ENCODE measurements at regions of chr2 and their contacts with region 1.

Region 1: GRCh38 chr2:189751080-189751658 is 11.4 kb downstream of the OSGEPL1 start:
- DNase-seq: no peak
- ATAC-seq: peak; percentile 56
- H3K4me3 Mint-ChIP-seq: no peak overlapping the region
- H3K27ac Mint-ChIP-seq: no peak overlapping the region
- H3K4me1 Mint-ChIP-seq: no peaks in the 10 kb centered on the region
- H3K27me3 Mint-ChIP-seq: no peaks in the 10 kb centered on the region
- CTCF ChIP-seq: no peak

Region 2: DNA sequence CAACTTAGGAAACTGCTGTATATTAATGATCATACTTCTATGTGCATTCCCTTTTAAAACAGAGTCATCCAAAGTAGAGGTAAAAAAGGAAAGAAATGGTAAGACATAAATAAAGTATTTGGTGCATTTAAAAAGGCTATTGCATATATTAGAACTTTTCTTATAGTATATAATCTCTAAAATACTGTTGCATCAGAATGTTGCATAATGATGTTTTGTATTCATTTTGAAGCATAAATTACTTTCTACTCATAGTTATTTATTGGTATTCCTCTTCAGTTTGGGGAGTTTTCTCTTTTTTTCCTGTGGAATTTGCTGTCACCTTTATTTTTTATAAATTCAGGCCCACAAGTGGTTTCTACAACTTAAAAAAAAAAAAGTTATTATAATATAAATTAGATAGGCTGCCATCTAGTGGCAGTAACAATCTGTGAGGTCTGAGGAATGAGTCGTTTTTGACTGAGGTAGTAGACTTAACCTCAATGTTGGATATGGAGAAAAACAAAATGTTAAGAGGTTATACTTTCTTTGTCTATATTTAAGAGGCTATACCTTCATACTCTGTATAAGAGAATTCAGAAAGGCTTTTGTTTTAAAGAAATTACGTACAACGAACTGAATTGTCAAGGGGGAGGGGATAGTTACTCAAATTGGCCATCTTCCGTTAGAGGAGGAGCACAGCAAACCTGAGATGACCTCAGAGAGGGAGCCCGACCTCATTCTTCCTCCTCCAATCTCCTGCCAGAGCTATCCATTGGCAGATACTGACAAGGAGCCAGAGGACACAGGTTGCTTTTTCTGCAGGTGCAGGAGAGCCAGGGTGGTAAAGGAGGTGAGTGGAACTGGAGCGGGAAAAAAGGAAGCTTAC is 52.9 kb before region 1 on chr2:
- CTCF ChIA-PET with region 1: no interaction called
- POLR2A ChIA-PET with region 1: no interaction called
- intact Hi-C with region 1: no loop called
- DNase-seq: no peak
- ATAC-seq: peak; percentile 58
- H3K4me3 Mint-ChIP-seq: no peak overlapping the region
- H3K27ac Mint-ChIP-seq: no peak overlapping the region
- H3K4me1 Mint-ChIP-seq: peaks cover 2% of the 10 kb centered on the region
- H3K27me3 Mint-ChIP-seq: no peaks in the 10 kb centered on the region
- CTCF ChIP-seq: no peak

Region 3: DNA sequence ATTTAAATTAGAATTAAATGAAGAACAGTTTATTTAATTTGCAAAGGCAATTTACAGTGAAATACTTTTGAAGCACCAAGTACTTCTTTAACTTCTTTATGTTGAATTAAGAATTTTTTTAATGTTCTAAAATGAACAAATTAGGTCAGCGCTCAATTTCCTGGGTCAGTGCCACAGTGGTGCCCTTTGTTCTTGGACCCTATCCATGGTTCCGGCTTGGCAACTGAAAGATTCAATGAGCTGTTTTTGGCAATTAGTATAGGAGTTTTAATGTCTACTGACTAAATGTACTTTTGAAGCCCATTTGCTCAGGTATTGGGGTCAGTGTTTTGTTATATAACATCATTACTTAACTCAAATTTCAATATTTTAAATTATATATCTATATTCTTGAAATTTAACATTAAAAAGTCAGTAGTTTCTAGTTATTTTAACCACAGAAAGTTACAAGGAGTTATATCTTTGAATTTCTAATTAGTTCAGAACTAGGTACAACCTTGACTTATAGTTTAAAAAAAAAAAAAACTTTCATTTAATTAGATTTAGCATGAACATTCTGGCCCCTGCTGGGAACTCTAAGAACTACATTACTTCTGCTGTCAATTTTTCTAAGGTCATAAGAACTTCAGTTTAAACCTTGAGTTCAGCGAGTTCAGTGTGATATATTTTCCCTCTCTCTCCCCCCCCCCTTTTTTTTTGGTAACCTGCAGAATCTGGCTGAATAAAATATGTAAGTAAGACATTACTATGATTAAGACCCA is 318.9 kb after region 1 on chr2:
- CTCF ChIA-PET with region 1: interaction called, 17 read pairs
- POLR2A ChIA-PET with region 1: no interaction called
- intact Hi-C with region 1: loop called (anchors 1 kb)
- DNase-seq: no peak
- ATAC-seq: peak; percentile 61
- H3K4me3 Mint-ChIP-seq: no peak overlapping the region
- H3K27ac Mint-ChIP-seq: no peak overlapping the region
- H3K4me1 Mint-ChIP-seq: no peaks in the 10 kb centered on the region
- H3K27me3 Mint-ChIP-seq: no peaks in the 10 kb centered on the region
- CTCF ChIP-seq: no peak

Region 4: DNA sequence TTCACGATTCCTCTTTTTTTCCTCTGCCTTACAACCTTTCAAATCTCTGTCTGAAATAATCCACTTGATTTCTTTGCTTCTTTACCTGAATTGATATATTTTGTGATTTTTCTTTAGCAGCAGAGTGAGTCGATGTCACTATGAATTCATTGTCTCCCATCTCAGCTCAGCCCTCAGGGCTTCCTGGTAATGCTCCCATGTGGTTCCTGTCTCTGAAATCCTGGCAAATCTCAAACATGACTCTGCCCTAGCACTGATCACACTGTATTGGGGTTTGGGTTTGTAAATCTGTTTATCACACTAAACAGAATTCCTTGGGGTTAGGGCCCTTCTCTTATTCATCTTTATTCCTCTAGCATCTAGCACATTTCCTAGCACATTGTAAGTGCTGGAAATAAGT is 354.4 kb after region 1 on chr2:
- CTCF ChIA-PET with region 1: no interaction called
- POLR2A ChIA-PET with region 1: no interaction called
- intact Hi-C with region 1: no loop called
- DNase-seq: no peak
- ATAC-seq: no peak
- H3K4me3 Mint-ChIP-seq: no peak overlapping the region
- H3K27ac Mint-ChIP-seq: no peak overlapping the region
- H3K4me1 Mint-ChIP-seq: no peaks in the 10 kb centered on the region
- H3K27me3 Mint-ChIP-seq: peaks cover 1% of the 10 kb centered on the region
- CTCF ChIP-seq: no peak

Measured in activated B cell treated with CpG ODN at 0.5 μM for 24 hours (primary cell).